ENCODE measurements at regions of chr11 and their contacts with region 1.

Region 1: DNA sequence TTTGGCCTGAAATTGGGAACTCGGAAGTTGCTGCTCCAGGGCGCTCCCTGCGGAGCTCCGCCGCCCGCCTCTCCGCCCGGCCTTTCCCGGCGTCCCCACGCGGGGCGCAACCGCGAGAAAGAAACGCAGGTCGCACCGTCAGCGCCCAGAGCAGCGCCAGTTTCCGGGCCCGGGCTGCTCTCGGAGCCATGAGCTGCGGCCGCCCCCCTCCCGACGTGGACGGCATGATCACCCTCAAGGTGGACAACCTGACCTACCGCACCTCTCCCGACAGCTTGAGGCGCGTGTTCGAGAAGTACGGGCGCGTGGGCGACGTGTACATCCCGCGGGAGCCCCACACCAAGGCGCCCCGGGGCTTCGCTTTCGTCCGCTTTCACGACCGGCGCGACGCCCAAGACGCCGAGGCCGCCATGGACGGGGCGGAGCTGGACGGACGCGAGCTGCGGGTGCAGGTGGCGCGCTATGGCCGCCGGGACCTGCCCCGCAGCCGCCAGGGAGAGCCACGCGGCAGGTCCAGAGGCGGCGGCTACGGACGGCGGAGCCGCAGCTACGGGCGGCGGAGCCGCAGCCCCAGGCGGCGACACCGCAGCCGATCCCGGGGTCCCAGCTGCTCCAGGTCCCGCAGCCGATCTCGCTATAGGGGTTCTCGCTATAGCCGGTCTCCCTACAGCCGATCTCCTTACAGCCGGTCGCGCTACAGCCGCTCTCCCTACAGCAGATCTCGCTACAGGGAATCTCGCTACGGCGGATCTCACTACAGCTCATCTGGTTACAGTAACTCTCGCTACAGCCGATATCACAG is 521 bp downstream of the SRSF8 start:
- DNase-seq: peak; percentile 87
- ATAC-seq: peak; percentile 68
- H3K4me3 Mint-ChIP-seq: peak overlapping the region; percentile 97
- H3K27ac Mint-ChIP-seq: peak overlapping the region; percentile 92
- H3K4me1 Mint-ChIP-seq: peaks cover 25% of the 10 kb centered on the region
- H3K27me3 Mint-ChIP-seq: peaks cover 2% of the 10 kb centered on the region

Region 2: GRCh38 chr11:93784152-93784934 is 1282.9 kb before region 1 on chr11 and contains the start of gene MED17:
- CTCF ChIA-PET with region 1: no interaction called
- POLR2A ChIA-PET with region 1: no interaction called
- intact Hi-C with region 1: loop called in 1 of 2 experiments (anchors 5 kb)
- DNase-seq: peak; percentile 95
- ATAC-seq: peak; percentile 97
- H3K4me3 Mint-ChIP-seq: peak within 1 kb of the TSS; percentile 89
- H3K27ac Mint-ChIP-seq: peak within 1 kb of the TSS; percentile 99
- H3K4me1 Mint-ChIP-seq: peaks cover 42% of the 10 kb centered on the region
- H3K27me3 Mint-ChIP-seq: no peaks in the 10 kb centered on the region
- total RNA-seq, gene MED17: 28.6 to 29.9 TPM

Region 3: GRCh38 chr11:94623120-94623735 is 444.0 kb before region 1 on chr11:
- CTCF ChIA-PET with region 1: no interaction called
- POLR2A ChIA-PET with region 1: no interaction called
- intact Hi-C with region 1: loop called in 1 of 2 experiments (anchors 10 kb)
- DNase-seq: peak; percentile 70
- ATAC-seq: peak; percentile 93
- H3K4me3 Mint-ChIP-seq: no peak overlapping the region
- H3K27ac Mint-ChIP-seq: no peak overlapping the region
- H3K4me1 Mint-ChIP-seq: peaks cover 2% of the 10 kb centered on the region
- H3K27me3 Mint-ChIP-seq: peaks cover 2% of the 10 kb centered on the region

Region 4: GRCh38 chr11:95014184-95014821 is 52.9 kb before region 1 on chr11:
- CTCF ChIA-PET with region 1: no interaction called
- POLR2A ChIA-PET with region 1: no interaction called
- intact Hi-C with region 1: no loop called
- DNase-seq: no peak
- ATAC-seq: no peak
- H3K4me3 Mint-ChIP-seq: no peak overlapping the region
- H3K27ac Mint-ChIP-seq: no peak overlapping the region
- H3K4me1 Mint-ChIP-seq: no peaks in the 10 kb centered on the region
- H3K27me3 Mint-ChIP-seq: peaks cover 5% of the 10 kb centered on the region

Region 5: GRCh38 chr11:95084509-95084908 is 17.3 kb after region 1 on chr11:
- CTCF ChIA-PET with region 1: interaction called, 125 read pairs
- POLR2A ChIA-PET with region 1: interaction called, 9 read pairs
- intact Hi-C with region 1: loop called (anchors 1 kb)
- DNase-seq: peak; percentile 83
- ATAC-seq: peak; percentile 82
- H3K4me3 Mint-ChIP-seq: no peak overlapping the region
- H3K27ac Mint-ChIP-seq: peak overlapping the region; percentile 87
- H3K4me1 Mint-ChIP-seq: peaks cover 42% of the 10 kb centered on the region
- H3K27me3 Mint-ChIP-seq: no peaks in the 10 kb centered on the region

Region 6: DNA sequence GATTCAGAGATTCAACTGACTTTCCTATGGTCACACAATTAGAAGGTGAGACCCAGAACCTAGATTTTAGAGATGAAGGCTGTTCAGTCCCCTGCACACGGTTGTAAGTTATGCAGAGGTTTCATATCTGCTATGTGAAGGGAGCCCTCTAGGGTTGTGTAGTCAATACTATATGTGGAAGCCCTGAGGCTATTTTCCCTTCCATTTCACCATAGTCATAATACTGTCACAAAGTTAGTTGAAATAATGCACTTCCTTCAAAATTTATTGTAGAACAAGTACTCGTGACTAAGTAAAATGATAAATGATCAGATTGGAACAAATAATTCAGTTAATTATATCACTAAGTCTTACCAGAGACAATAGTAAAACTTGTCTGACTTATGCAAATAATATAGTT is 71.2 kb after region 1 on chr11:
- CTCF ChIA-PET with region 1: interaction called, 7 read pairs
- POLR2A ChIA-PET with region 1: no interaction called
- intact Hi-C with region 1: loop called (anchors 1 to 5 kb)
- DNase-seq: no peak
- ATAC-seq: peak; percentile 69
- H3K4me3 Mint-ChIP-seq: no peak overlapping the region
- H3K27ac Mint-ChIP-seq: no peak overlapping the region
- H3K4me1 Mint-ChIP-seq: peaks cover 5% of the 10 kb centered on the region
- H3K27me3 Mint-ChIP-seq: peaks cover 4% of the 10 kb centered on the region

Region 7: GRCh38 chr11:95764267-95764898 is 697.1 kb after region 1 on chr11:
- CTCF ChIA-PET with region 1: interaction called, 5 read pairs
- POLR2A ChIA-PET with region 1: no interaction called
- intact Hi-C with region 1: loop called (anchors 2 kb)
- DNase-seq: no peak
- ATAC-seq: peak; percentile 65
- H3K4me3 Mint-ChIP-seq: no peak overlapping the region
- H3K27ac Mint-ChIP-seq: no peak overlapping the region
- H3K4me1 Mint-ChIP-seq: no peaks in the 10 kb centered on the region
- H3K27me3 Mint-ChIP-seq: no peaks in the 10 kb centered on the region